Activated T-helper 1 cell treated with anti-CD3 and anti-CD28 coated beads, Interleukin-12 subunit alpha, Interleukin-12 subunit beta, Interleukin-2, Interleukin-4 antibody, amounts not matched to agents 30 ng/mL and 10 ng/mL and 1 ng/mL, durations not matched to agents 14 hours and 24 hours and 36 hours (primary cell): ENCODE measurements at regions of chr1 and their contacts with region 1.

Region 1: GRCh38 chr1:152047730-152048402 is 11.1 kb upstream of the S100A11 start:
- DNase-seq: peak; percentile 83
- H3K4me3 Mint-ChIP-seq: peak overlapping the region; percentile 80
- H3K27ac Mint-ChIP-seq: peak overlapping the region; percentile 96
- H3K4me1 Mint-ChIP-seq: peaks cover 40% of the 10 kb centered on the region
- H3K27me3 Mint-ChIP-seq: peaks cover 3% of the 10 kb centered on the region

Region 2: DNA sequence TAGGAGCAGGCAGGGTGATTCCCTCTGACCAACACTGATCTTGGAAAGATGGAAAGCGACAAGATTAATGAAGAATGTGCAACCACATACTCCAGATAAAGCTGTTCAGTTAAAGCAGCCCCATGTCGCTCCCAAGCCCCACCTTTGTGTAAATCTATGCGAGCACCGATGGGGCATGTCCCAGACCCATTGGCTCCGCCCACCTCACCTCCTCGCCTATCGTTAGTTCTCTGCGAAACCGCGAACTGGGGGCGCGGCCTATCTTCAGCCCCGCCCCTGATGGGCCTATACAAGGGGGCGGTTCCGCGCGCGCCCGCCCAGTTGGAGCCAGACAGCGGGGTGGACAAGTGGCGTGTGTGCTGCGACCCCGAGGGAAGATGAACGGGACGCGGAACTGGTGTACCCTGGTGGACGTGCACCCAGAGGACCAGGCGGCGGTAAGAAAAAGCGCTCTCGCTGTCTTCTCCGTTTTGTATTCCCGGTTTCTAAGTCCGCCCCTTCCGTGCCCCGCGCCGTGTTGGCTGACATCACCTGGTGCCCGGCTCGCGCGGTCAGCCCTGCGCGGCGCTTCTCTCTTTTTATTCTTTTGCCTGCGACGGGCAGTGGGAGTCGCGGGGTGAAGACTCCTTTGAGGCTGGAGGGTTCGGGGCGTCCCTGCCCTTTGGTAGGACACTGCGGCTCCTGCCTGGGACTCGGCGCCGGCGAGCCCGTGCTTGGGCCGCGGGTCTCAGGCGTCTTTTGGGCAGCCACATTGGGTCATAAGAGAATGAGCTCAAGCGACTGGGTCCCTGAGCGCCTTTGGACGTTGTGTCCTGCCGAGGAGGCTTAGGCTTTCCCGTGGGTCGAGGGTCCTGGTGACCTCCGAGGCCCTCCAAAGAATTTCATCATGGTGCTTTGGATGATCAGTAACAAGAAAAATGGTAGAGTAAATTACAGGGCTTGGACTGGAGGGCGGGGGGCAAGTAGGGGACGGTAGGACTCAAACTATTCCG is 507.6 kb before region 1 on chr1 and contains the start of gene TUFT1:
- intact Hi-C with region 1: no loop called
- DNase-seq: peak; percentile 91
- H3K4me3 Mint-ChIP-seq: peak within 1 kb of the TSS; percentile 91
- H3K27ac Mint-ChIP-seq: peak within 1 kb of the TSS; percentile 62
- H3K4me1 Mint-ChIP-seq: peaks cover 16% of the 10 kb centered on the region
- H3K27me3 Mint-ChIP-seq: peaks cover 10% of the 10 kb centered on the region
- total RNA-seq, gene TUFT1: 1.9 and 2.3 TPM in 2 replicates

Region 3: DNA sequence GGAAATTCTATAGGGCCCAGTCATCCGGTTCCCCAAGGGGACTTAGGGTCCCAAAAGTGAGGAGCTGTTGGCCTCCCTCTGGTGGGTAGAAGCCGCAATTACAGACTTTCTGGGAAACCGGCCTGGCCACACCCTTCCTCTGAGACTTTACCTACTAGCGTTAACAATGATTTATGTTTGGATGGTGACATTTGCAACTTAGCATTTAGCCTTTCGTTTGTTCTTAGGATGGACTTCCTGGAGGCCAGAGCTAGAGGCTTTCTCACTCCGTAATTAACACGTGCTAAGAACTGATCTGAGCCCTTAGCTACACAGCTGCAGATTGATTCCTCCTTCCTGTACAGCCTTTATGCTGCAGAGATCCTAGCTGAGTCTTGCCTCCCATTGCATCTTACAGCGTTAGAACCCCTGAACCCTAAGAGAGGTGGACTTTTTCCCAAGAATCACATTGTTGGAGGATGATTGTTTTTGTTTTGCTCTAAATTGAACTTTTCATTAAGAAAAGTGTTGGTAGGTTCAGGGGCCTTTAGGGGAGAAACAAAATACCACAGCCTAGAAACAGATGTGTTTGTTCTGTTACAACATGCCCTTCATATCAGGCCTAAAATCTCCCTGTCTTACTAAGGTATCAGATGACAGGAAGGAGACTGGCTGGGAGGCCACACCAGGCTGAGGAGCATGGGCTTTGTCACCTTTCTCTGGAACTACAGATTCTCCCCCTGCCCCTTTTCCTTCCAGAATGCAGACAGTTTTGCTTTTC is 13.0 kb before region 1 on chr1:
- intact Hi-C with region 1: loop called (anchors 1 kb)
- DNase-seq: peak; percentile 65
- H3K4me3 Mint-ChIP-seq: peak overlapping the region; percentile 96
- H3K27ac Mint-ChIP-seq: peak overlapping the region; percentile 94
- H3K4me1 Mint-ChIP-seq: peaks cover 41% of the 10 kb centered on the region
- H3K27me3 Mint-ChIP-seq: no peaks in the 10 kb centered on the region

Region 4: DNA sequence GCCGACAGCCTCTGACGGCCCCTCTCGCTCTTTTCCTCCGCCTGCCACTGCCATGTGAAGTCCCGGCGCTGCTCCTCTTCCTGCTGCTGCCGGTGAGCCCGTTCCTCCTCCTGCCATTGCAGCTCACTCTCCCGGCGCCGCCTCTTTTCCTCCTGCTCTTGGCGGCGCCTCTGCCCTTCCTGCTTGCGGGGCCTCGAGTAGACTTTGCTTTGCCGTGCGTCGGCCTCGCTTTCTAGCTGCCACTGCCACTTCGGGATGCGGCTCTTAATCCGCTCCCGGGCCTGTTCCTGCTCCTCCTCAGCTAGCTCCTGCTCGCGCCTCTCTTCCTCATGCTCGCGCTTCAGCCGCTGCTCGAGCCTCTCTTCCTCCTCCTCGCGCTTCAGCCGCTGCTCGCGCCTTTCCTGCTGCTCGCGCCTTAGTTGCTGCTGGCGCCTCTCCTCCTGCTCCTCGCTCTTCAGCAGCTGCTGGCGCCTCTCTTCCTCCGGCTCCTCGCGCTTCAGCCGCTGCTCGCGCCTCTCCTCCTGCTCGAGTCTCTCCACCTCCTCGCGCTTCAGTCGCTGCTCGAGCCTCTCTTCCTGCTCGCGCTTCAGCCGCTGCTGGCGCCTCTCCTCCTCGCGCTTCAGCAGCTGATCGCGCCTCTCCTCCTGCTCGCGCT is 63.1 kb after region 1 on chr1:
- intact Hi-C with region 1: loop called (anchors 5 kb)
- DNase-seq: peak; percentile 5
- H3K4me3 Mint-ChIP-seq: no peak overlapping the region
- H3K27ac Mint-ChIP-seq: no peak overlapping the region
- H3K4me1 Mint-ChIP-seq: peaks cover 12% of the 10 kb centered on the region
- H3K27me3 Mint-ChIP-seq: peaks cover 24% of the 10 kb centered on the region

Region 5: DNA sequence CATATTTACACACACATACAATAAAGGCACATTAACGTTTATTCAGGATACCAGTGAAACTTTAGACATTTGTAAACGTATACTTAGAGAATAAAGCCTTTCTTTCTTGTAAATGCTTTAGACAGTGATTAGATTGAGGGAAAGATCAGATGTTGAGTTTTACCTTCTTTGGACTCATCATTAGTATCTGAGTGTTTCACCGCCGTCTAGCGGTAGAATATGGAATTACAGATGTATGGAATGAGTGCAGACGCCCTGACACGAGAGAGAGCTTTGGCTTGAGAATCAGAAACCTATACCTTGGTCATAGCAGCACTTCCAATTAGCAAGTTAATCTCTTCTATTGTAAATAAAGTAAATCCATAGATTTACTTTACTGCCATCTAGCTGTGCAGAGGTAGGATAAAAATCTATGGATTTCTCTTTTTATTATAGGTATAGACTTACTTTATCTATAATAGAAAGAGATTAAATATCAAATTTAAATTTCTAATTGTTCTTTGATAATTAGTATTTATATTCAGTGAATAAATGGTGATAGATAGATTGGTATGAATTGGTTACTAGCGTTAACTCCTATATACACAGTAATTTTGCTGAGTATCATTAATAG is 299.4 kb after region 1 on chr1:
- intact Hi-C with region 1: loop called (anchors 2 kb)
- DNase-seq: peak; percentile 21
- H3K4me3 Mint-ChIP-seq: no peak overlapping the region
- H3K27ac Mint-ChIP-seq: no peak overlapping the region
- H3K4me1 Mint-ChIP-seq: no peaks in the 10 kb centered on the region
- H3K27me3 Mint-ChIP-seq: peaks cover 18% of the 10 kb centered on the region

Region 6: GRCh38 chr1:152440635-152441471 is 393.0 kb after region 1 on chr1:
- intact Hi-C with region 1: loop called (anchors 2 kb)
- DNase-seq: peak; percentile 36
- H3K4me3 Mint-ChIP-seq: no peak overlapping the region
- H3K27ac Mint-ChIP-seq: no peak overlapping the region
- H3K4me1 Mint-ChIP-seq: peaks cover 4% of the 10 kb centered on the region
- H3K27me3 Mint-ChIP-seq: peaks cover 20% of the 10 kb centered on the region